ENCODE measurements at regions of chr7 and their contacts with region 1.

Region 1: GRCh38 chr7:29345600-29345999 is 151.0 kb downstream of the CHN2 start:
- DNase-seq: peak; percentile 41
- H3K4me3 ChIP-seq: no peak overlapping the region
- H3K27ac ChIP-seq: no peak overlapping the region
- H3K4me1 ChIP-seq: no peaks in the 10 kb centered on the region
- H3K27me3 ChIP-seq: peaks cover 1 to 5% of the 10 kb centered on the region in 2 experiments
- CTCF ChIP-seq: peak; percentile 45 to 49
- POLR2A ChIP-seq: no peak

Region 2: GRCh38 chr7:29113384-29114103 is 232.1 kb before region 1 on chr7:
- CTCF ChIA-PET with region 1: interaction called, 20 read pairs
- POLR2A ChIA-PET with region 1: no interaction called
- dilution Hi-C with region 1: no loop called
- intact Hi-C with region 1: loop called (anchors 1 kb)
- DNase-seq: peak; percentile 46
- H3K4me3 ChIP-seq: no peak overlapping the region
- H3K27ac ChIP-seq: no peak overlapping the region
- H3K4me1 ChIP-seq: peaks cover 16% of the 10 kb centered on the region
- H3K27me3 ChIP-seq: peaks cover 8 to 13% of the 10 kb centered on the region in 2 experiments
- CTCF ChIP-seq: peak; percentile 3 to 42
- POLR2A ChIP-seq: no peak

Region 3: DNA sequence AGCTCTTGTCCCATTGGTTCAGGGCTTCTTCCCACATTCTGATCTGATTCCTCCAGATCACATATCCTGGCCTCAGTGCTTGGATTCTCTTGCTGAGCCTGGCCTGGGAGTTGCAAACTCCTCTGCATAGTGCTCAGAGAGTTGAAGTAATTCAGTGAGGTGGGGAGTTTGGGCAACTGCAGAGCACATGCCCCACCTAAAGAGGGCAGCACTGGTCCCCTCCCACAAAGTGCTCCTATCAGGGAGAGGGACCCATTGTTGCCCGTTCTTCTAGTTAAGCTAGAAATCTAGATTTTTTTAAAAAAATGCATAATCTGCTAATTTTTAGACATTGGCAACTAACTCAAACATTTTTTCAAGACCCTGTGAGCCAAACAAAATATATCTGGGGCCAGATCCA is 106.0 kb before region 1 on chr7:
- CTCF ChIA-PET with region 1: interaction called, 15 read pairs
- POLR2A ChIA-PET with region 1: no interaction called
- dilution Hi-C with region 1: no loop called
- intact Hi-C with region 1: loop called (anchors 1 kb)
- DNase-seq: no peak
- H3K4me3 ChIP-seq: no peak overlapping the region
- H3K27ac ChIP-seq: no peak overlapping the region
- H3K4me1 ChIP-seq: no peaks in the 10 kb centered on the region
- H3K27me3 ChIP-seq: peaks cover 0 to 2% of the 10 kb centered on the region in 2 experiments
- CTCF ChIP-seq: peak; percentile 42 to 57
- POLR2A ChIP-seq: no peak

Region 4: DNA sequence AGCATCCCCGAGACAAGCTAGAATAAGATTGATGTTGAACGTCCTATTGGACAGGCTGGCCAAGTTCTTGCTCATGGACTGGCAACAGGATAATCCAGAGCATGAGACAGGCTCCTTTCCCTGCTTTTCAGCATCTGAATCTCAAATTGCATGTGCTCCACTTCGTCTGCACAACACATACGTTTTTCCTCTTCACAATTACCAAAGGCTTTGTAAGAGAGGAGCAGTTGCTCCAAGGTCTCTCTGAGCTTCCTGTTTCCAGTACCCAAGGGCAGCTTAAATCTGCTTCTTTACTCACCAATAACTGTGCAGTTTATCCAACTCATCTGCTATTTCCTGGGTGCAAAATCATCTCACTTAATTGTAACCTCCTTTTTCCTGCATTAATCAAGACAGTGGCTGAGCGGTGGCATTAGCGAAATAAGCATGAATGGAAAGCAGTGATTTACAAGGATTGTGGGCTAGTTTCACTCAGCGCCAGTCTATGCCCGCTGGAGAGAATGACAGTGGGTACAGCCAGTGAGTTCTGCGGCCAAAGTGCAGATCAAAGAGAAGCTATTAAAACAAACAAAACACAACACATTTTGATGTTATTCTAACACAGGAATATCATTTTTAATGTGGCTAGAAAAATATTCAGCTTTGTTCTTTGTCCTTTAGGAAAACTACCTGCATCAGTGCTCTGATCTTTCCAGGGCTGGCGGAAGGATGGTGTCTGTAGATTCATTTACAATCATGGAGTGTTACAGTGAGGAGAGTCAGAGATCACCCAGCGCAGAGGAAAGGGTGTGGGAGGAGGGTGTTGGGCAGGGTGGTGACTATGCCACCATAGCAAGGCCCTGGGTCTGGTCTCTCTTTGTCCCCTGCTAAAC is 71.2 kb before region 1 on chr7:
- CTCF ChIA-PET with region 1: no interaction called
- POLR2A ChIA-PET with region 1: no interaction called
- dilution Hi-C with region 1: no loop called
- intact Hi-C with region 1: no loop called
- DNase-seq: no peak
- H3K4me3 ChIP-seq: no peak overlapping the region
- H3K27ac ChIP-seq: no peak overlapping the region
- H3K4me1 ChIP-seq: peaks cover 5% of the 10 kb centered on the region
- H3K27me3 ChIP-seq: no peaks in the 10 kb centered on the region
- CTCF ChIP-seq: no peak
- POLR2A ChIP-seq: no peak

Region 5: GRCh38 chr7:29574659-29575058 is 229.1 kb after region 1 on chr7:
- CTCF ChIA-PET with region 1: no interaction called
- POLR2A ChIA-PET with region 1: no interaction called
- dilution Hi-C with region 1: no loop called
- intact Hi-C with region 1: no loop called
- DNase-seq: no peak
- H3K4me3 ChIP-seq: no peak overlapping the region
- H3K27ac ChIP-seq: no peak overlapping the region
- H3K4me1 ChIP-seq: no peaks in the 10 kb centered on the region
- H3K27me3 ChIP-seq: peaks cover 6 to 11% of the 10 kb centered on the region in 2 experiments
- CTCF ChIP-seq: no peak
- POLR2A ChIP-seq: no peak

Measured in endothelial cell of umbilical vein (primary cell).